Activated CD8-positive, alpha-beta T cell treated with anti-CD3 and anti-CD28 coated beads for 36 hours (primary cell): ENCODE measurements at regions of chr22 and their contacts with region 1.

Region 1: DNA sequence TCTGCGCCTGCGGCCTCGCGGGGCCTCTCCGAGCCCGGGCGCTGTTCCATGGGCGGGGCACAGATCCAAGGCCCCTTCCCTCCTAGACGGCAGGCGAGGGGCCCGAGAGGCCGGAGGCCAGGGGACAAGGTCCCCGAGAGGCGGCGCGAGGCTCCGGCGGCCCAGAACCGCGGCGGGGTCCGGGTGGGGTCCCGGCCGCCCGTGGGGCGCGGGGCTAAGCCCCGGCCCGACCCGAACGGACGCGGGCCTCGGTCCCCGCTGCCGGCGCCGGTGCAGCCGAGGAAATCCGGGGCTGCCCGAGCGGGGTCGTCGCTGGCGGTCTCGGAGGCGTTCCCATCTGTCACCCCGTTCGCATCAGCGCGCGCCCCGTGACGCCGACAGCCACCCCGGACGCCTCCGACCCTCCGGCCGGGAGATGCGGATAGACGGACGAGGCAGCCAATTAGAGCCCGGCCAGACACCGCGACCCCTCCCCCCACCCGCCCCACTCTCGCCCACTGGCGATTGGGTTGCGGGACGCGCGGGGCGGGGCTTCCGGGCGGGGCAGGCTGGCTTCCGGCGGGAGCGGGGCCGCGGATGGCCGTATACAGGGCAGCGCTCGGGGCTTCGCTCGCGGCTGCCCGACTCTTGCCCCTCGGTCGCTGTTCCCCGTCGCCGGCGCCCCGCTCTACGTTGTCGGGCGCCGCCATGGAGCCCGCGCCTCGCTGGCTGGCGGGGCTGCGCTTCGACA is at the start of gene SELENOO:
- DNase-seq: peak; percentile 94
- ATAC-seq: peak; percentile 95
- H3K4me3 Mint-ChIP-seq: peak within 1 kb of the TSS; percentile 83
- H3K27ac Mint-ChIP-seq: peak within 1 kb of the TSS; percentile 64
- H3K4me1 Mint-ChIP-seq: peaks cover 27% of the 10 kb centered on the region
- H3K27me3 Mint-ChIP-seq: no peaks in the 10 kb centered on the region
- CTCF ChIP-seq: no peak
- total RNA-seq, gene SELENOO: 24.0 to 25.5 TPM

Region 2: GRCh38 chr22:50190182-50190940 is 10.3 kb before region 1 on chr22:
- CTCF ChIA-PET with region 1: no interaction called
- POLR2A ChIA-PET with region 1: interaction called, 11 read pairs
- intact Hi-C with region 1: no loop called
- DNase-seq: peak; percentile 90
- ATAC-seq: peak; percentile 43
- H3K4me3 Mint-ChIP-seq: peak overlapping the region; percentile 89
- H3K27ac Mint-ChIP-seq: peak overlapping the region; percentile 99
- H3K4me1 Mint-ChIP-seq: peaks cover 45% of the 10 kb centered on the region
- H3K27me3 Mint-ChIP-seq: peaks cover 1% of the 10 kb centered on the region
- CTCF ChIP-seq: peak; percentile 44